Common myeloid progenitor, CD34-positive (primary cell): ENCODE measurements at regions of chr17 and their contacts with region 1.

Region 1: GRCh38 chr17:35531160-35531559 is 6.3 kb downstream of the SLFN12L start:
- DNase-seq: no peak
- H3K4me3 ChIP-seq: no peak overlapping the region
- H3K27ac ChIP-seq: no peak overlapping the region
- H3K4me1 ChIP-seq: peaks cover 0 to 4% (median 0%) of the 10 kb centered on the region in 4 experiments
- H3K27me3 ChIP-seq: no peaks in the 10 kb centered on the region

Region 2: GRCh38 chr17:35170968-35171771 is 360.0 kb before region 1 on chr17:
- CTCF ChIA-PET with region 1: interaction called, 17 read pairs
- POLR2A ChIA-PET with region 1: no interaction called
- DNase-seq: peak; percentile 42 to 62 (median 55)
- H3K4me3 ChIP-seq: no peak overlapping the region
- H3K27ac ChIP-seq: no peak overlapping the region
- H3K4me1 ChIP-seq: no peaks in the 10 kb centered on the region
- H3K27me3 ChIP-seq: peaks cover 0 to 7% (median 0%) of the 10 kb centered on the region in 5 experiments

Region 3: GRCh38 chr17:35521150-35521549 is 10.0 kb before region 1 on chr17:
- CTCF ChIA-PET with region 1: interaction called, 18 read pairs
- POLR2A ChIA-PET with region 1: interaction called, 3 read pairs
- DNase-seq: peak in 2 of 3 donors; percentile 45 to 62
- H3K4me3 ChIP-seq: peak overlapping the region in 3 of 7 experiments; percentile 2 to 58 (median 36)
- H3K27ac ChIP-seq: no peak overlapping the region
- H3K4me1 ChIP-seq: peaks cover 4 to 50% (median 34%) of the 10 kb centered on the region in 4 experiments
- H3K27me3 ChIP-seq: no peaks in the 10 kb centered on the region

Region 4: DNA sequence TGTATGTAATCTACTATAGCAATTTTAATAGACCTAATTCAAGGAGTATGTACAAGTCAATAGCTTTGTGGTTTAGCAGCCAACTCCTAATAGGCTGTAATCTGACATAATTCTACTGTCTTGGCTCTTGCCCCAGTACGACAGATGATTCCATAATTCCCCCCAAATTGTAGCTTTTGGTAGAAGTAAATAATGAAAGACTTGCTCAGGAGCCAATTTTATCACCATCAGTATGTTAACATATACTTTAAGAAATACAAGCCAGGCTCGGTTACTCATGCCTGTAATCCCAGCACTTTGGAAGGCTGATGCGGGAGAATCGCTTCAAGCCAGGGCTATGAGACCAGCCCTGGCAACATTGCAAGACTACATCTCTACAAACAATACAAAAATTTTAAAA is 109.9 kb after region 1 on chr17:
- CTCF ChIA-PET with region 1: no interaction called
- POLR2A ChIA-PET with region 1: no interaction called
- DNase-seq: no peak
- H3K4me3 ChIP-seq: no peak overlapping the region
- H3K27ac ChIP-seq: no peak overlapping the region
- H3K4me1 ChIP-seq: no peaks in the 10 kb centered on the region
- H3K27me3 ChIP-seq: no peaks in the 10 kb centered on the region